Ovary (tissue), 10 donors: ENCODE measurements at regions of chr1 and their contacts with region 1.

Region 1: DNA sequence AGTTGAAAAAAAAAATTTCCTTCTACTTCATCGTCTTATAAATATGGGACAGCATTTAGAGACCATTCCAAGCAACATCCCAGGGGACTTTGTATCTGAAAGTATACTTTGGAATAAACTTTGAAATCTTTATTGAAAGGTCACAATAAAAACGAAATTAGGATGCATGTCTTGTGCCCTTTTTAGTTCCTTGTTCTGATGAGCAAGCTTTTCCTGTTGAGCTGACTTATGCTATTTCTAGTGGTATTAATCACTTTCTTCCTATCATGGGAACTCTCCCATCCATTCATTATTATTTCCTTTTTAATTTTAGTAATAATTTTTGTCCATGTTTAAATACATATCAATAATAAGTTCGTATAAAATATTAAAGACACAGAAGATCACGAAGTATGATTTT is 4.0 kb upstream of the GBP2 start:
- DNase-seq: no peak
- H3K4me3 ChIP-seq: no peak overlapping the region
- H3K27ac ChIP-seq: peak overlapping the region in 1 of 2 donors; percentile 64
- H3K4me1 ChIP-seq: no peaks in the 10 kb centered on the region
- H3K27me3 ChIP-seq: no peaks in the 10 kb centered on the region
- CTCF ChIP-seq: no peak
- EP300 ChIP-seq: no peak
- POLR2A ChIP-seq: no peak

Region 2: DNA sequence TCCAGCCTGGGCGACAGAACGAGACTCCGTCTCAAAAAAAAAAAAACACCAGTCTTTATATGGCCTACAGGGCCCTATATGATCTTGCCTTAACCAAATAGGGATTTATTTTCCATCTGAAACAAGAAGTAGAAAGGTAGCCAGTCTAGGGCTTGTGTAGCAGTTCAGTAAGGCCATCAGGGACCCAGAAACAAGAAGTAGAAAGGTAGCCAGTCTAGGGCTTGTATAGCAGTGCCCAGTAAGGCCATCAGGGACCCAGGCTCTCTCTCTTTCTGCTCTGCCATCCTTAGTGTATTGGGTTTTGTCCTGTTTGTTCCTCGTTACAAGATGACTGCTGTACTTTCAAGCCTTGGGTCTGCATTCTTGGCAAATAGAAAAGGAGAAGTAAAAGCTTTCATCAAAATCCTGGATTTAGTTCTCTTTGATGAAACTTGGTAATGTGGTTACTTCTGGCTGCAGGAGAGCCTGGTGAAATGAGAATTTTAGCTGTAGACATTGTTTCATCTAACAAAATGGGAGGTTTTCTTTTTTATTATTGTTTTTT is 399.7 kb before region 1 on chr1:
- intact Hi-C with region 1: no loop called
- DNase-seq: no peak
- H3K4me3 ChIP-seq: no peak overlapping the region
- H3K27ac ChIP-seq: no peak overlapping the region
- H3K4me1 ChIP-seq: peaks cover 12% of the 10 kb centered on the region
- H3K27me3 ChIP-seq: no peaks in the 10 kb centered on the region
- CTCF ChIP-seq: no peak
- EP300 ChIP-seq: no peak
- POLR2A ChIP-seq: no peak

Region 3: GRCh38 chr1:89069951-89070350 is 60.0 kb before region 1 on chr1:
- intact Hi-C with region 1: loop called in 1 of 4 experiments (anchors 10 kb)
- DNase-seq: no peak
- H3K4me3 ChIP-seq: peak overlapping the region; percentile 31
- H3K27ac ChIP-seq: peak overlapping the region in 1 of 2 donors; percentile 53
- H3K4me1 ChIP-seq: peaks cover 4% of the 10 kb centered on the region
- H3K27me3 ChIP-seq: no peaks in the 10 kb centered on the region
- CTCF ChIP-seq: no peak
- EP300 ChIP-seq: no peak
- POLR2A ChIP-seq: no peak